HEK293T (cell line): ENCODE measurements at regions of chr1 and their contacts with region 1.

Region 1: GRCh38 chr1:161153679-161154426 is at the start of gene UFC1:
- DNase-seq: peak; percentile 85

Region 2: DNA sequence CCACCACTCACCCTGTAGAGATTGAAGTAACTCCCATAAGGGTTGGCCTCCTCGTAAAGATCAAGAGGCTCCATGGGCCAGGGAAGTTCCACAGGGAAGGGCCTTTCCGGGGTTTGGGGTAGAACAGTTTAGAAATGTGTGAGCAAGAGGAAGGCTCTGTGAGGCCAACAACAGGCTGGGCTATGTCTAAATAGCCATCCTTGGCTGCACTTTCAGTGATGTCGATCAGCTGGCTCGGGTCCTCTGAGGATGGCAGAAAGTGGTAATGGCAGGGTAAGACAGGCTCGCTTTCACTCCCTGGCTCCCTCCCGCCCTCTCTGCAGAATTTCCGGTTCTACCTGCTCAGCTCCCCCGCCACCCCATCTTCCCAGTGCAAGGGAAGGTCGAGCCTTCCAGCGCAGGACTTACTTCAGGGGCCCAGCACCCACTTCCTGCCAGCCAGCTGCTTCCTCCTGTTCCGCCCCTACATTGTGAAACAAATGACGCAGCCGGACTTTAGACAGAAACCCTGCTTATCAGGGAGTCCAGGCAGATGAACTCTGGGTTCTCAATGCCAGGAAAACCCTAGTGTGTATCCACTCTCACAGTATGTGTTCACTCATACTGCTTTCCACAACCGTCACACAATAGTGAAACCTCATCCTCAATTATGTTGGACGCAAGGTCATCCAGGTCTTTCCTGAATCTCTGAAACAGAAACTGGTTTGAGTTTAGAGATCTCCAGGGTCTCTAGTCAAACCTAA is 140.2 kb before region 1 on chr1:
- CTCF ChIA-PET with region 1: no interaction called
- POLR2A ChIA-PET with region 1: no interaction called
- DNase-seq: no peak

Region 3: GRCh38 chr1:161111527-161111926 is 42.3 kb before region 1 on chr1:
- CTCF ChIA-PET with region 1: no interaction called
- POLR2A ChIA-PET with region 1: no interaction called
- DNase-seq: no peak

Region 4: DNA sequence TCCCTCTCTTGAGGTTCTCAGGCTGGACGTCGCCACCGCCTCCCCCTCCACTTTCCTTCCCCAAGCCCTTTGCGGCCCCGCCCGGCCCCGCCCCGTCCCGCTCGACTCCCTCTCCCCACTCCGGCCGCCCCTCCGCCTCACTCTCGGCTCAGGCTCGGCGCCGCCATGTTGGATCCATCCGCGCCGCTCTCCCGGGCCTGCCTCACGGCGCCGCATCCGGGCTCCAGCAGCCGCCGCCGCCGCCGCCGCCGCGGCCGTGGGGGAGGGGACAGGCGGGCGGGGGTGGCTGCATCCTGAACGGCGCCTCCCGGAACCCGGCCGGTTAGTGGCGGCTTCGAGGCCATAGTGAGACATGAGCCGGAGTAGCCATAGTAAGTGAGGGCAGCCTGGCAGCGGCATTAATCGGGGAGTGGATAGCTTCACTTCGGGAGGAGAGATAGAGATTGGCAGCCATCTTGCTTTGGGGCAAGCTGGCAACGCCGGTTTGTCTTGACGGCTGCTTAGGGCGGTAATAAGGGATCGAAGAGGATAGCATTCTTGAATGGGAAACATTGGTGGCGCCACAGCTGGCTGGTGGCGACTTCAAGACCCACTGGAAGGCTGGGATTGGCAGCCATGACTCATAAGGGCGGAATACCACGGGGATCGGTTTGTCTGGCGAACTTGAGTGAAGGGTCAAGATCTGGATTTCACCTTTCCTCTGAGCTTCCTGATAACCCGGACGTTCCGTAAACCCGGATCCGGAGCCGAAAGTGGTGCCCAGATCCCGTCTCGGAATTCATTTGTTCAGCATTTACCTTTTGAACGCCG is 21.2 kb before region 1 on chr1 and contains the start of gene DEDD:
- CTCF ChIA-PET with region 1: interaction called, 3 read pairs
- POLR2A ChIA-PET with region 1: interaction called, 13 read pairs
- DNase-seq: peak; percentile 93